ENCODE measurements at regions of chr10 and their contacts with region 1.

Region 1: DNA sequence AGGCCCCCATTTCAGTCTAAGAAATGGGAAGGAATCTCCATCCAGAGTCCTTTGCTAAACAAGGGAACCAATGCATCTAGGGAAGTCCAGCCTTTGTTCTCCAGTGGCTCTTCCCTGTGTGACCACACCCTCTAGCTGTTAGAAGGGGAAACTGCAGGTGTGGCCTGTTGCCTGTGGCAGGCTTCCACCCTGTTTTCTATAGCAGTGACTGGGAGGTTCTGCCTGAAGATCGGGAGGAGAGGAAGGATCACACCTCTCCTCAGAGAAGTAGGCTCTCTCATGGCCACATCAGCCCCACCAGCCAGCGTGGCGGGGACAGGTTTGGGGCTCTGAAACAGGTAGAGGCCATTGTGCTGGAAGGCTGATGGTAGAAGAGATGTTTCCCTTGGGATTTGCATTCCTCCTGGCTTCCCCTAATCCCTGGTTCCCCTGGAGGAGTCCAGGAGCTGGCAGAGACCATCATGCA is 47.7 kb upstream of the TRIM8 start:
- DNase-seq: peak in 1 of 3 donors; percentile 63
- ATAC-seq: peak; percentile 8 to 52
- H3K4me3 ChIP-seq: no peak overlapping the region
- H3K27ac ChIP-seq: peak overlapping the region; percentile 34
- H3K4me1 ChIP-seq: peaks cover 28% of the 10 kb centered on the region
- H3K27me3 ChIP-seq: no peaks in the 10 kb centered on the region

Region 2: GRCh38 chr10:102645741-102646609 is 49.4 kb after region 1 on chr10:
- intact Hi-C with region 1: loop called in 1 of 4 experiments (anchors 5 kb)
- DNase-seq: peak; percentile 94 to 96 (median 95)
- ATAC-seq: peak; percentile 61 to 73
- H3K4me3 ChIP-seq: peak overlapping the region; percentile 93
- H3K27ac ChIP-seq: peak overlapping the region; percentile 98
- H3K4me1 ChIP-seq: peaks cover 32% of the 10 kb centered on the region
- H3K27me3 ChIP-seq: no peaks in the 10 kb centered on the region

Measured in right cardiac atrium (tissue), 5 donors.